Head of caudate nucleus (tissue), 42 donors: ENCODE measurements at regions of chr18 and their contacts with region 1.

Region 1: DNA sequence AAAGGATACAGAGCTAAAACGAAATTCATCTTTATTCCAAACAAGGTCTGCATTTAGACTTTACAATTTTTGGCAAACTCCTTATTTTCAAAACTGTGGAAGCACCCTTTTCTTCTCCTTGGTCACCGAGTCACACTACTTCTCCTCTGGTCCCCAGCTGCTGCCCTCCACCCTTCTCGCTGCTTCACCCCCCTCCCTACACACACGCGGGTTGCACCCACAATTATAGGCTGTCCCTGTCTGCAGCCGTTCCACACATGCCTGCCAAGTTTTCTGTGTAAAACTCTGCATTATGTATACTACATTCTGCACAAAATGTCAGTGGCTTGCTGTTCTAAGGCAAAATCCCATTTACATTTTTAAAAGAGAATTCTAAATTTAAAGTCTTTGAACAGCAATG is 63.5 kb downstream of the PTPN2 start:
- DNase-seq: peak in 26 of 42 donors; percentile 14 to 70 (median 34)

Region 2: GRCh38 chr18:12702221-12703095 is 118.0 kb before region 1 on chr18 and contains the starts of genes CEP76 and PSMG2:
- intact Hi-C with region 1: no loop called
- DNase-seq: peak; percentile 70 to 95 (median 88)

Region 3: GRCh38 chr18:12777500-12777944 is 43.0 kb before region 1 on chr18:
- intact Hi-C with region 1: loop called (anchors 10 kb)
- DNase-seq: peak in 1 of 42 donors; percentile 31

Region 4: GRCh38 chr18:12883684-12884405 is 63.3 kb after region 1 on chr18 and contains the start of gene PTPN2:
- intact Hi-C with region 1: loop called (anchors 10 kb)
- DNase-seq: peak; percentile 85 to 97 (median 93)

Region 5: DNA sequence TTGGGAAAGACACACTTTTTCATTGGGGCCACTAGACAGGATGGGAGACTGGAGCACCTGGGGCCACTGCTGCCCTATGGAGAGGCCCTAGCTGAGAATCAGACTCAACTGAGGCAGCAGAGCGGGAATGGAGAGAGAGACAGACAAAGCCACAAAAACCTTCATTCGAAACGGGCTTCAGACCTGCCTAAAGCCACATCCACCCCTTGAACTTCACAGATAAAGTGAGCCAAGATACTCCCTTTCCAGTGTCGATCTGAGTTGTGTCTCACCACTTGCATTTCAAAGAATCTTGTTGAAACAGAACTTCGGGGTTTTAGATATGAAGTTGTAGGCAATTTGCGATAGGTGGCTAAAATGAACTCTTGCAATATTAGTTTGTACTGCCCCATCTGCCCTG is 386.8 kb after region 1 on chr18:
- intact Hi-C with region 1: no loop called
- DNase-seq: no peak